ENCODE measurements at regions of chr9 and their contacts with region 1.

Region 1: DNA sequence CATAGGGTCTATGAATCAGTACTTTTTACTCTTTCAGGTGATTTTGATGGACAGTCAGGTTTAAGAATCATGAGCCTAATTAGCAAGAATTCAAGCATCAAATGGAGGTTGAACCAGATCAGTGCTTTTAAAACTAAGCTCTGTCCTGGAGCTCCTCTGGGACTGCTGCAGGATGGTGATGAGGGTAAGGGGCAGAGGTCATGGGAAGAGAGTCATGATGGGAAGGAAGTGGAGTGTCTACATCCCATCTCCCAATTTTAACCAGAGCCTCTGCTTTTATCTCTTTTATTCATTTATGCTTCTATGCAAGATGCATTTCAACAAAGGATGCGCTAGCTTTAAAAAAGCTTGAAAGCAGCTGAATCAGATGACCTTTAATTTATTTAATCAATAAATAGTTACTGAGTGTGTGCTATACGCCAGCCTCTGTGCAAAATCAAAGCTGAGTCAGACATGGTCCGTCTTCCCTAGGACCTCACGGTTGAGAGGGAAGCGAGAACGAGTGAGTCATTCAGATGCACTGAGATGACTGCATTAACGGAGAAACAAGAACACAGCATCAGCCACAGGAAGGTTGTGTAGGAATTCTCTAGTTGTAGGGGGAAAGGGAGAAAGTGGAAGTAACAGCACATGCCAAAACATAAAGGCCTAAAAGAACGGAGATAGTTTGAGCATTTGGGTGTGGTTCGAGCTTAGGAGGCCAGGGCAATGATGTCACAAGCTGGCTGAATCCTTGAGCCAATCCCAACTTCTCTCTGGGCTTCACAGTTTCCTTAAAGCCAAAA is 441.6 kb upstream of the BRINP1 start:
- DNase-seq: no peak
- ATAC-seq: no peak
- H3K4me3 ChIP-seq: no peak overlapping the region
- H3K27ac ChIP-seq: no peak overlapping the region
- H3K4me1 ChIP-seq: no peaks in the 10 kb centered on the region
- H3K27me3 ChIP-seq: no peaks in the 10 kb centered on the region
- CTCF ChIP-seq: no peak
- POLR2A ChIP-seq: no peak

Region 2: GRCh38 chr9:119761737-119762288 is 49.0 kb before region 1 on chr9:
- intact Hi-C with region 1: loop called in 1 of 2 experiments (anchors 10 kb)
- DNase-seq: no peak
- ATAC-seq: no peak
- H3K4me3 ChIP-seq: no peak overlapping the region
- H3K27ac ChIP-seq: no peak overlapping the region
- H3K4me1 ChIP-seq: no peaks in the 10 kb centered on the region
- H3K27me3 ChIP-seq: no peaks in the 10 kb centered on the region
- CTCF ChIP-seq: no peak
- POLR2A ChIP-seq: no peak